ENCODE measurements at regions of chr15 and their contacts with region 1.

Region 1: DNA sequence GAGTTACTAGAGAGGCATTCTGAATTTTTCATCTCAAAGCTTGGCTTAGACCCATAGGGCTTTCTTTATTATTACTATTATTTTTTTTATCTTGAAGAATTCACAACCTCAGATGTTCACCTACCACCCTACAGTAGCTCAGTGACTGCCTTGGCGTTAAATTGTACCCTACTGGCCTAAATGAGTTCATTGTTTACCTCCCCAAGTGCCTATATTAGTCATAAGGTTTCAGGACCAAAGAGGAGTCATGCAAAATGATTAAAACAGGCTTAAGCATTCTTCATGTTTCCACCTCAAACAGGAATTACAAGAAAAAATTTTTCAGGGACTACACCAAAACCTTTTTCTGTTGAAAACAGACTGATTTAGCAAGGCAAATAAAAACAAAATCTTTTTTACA is 751.5 kb downstream of the SQOR start:
- DNase-seq: no peak
- ATAC-seq: no peak
- H3K4me3 ChIP-seq: no peak overlapping the region
- H3K4me3 Mint-ChIP-seq: no peak overlapping the region
- H3K27ac ChIP-seq: no peak overlapping the region
- H3K27ac Mint-ChIP-seq: no peak overlapping the region
- H3K4me1 ChIP-seq: no peaks in the 10 kb centered on the region
- H3K4me1 Mint-ChIP-seq: no peaks in the 10 kb centered on the region
- H3K27me3 ChIP-seq: no peaks in the 10 kb centered on the region
- H3K27me3 Mint-ChIP-seq: no peaks in the 10 kb centered on the region
- CTCF ChIP-seq: no peak

Region 2: GRCh38 chr15:46151786-46152185 is 234.6 kb before region 1 on chr15:
- CTCF ChIA-PET with region 1: no interaction called
- POLR2A ChIA-PET with region 1: no interaction called
- intact Hi-C with region 1: no loop called
- DNase-seq: no peak
- ATAC-seq: no peak
- H3K4me3 ChIP-seq: no peak overlapping the region
- H3K4me3 Mint-ChIP-seq: no peak overlapping the region
- H3K27ac ChIP-seq: no peak overlapping the region
- H3K27ac Mint-ChIP-seq: no peak overlapping the region
- H3K4me1 ChIP-seq: no peaks in the 10 kb centered on the region
- H3K4me1 Mint-ChIP-seq: no peaks in the 10 kb centered on the region
- H3K27me3 ChIP-seq: no peaks in the 10 kb centered on the region
- H3K27me3 Mint-ChIP-seq: no peaks in the 10 kb centered on the region
- CTCF ChIP-seq: no peak

Region 3: GRCh38 chr15:46442184-46442583 is 55.8 kb after region 1 on chr15:
- CTCF ChIA-PET with region 1: no interaction called
- POLR2A ChIA-PET with region 1: no interaction called
- intact Hi-C with region 1: loop called in 1 of 2 experiments (anchors 5 kb)
- DNase-seq: no peak
- ATAC-seq: no peak
- H3K4me3 ChIP-seq: no peak overlapping the region
- H3K4me3 Mint-ChIP-seq: no peak overlapping the region
- H3K27ac ChIP-seq: no peak overlapping the region
- H3K27ac Mint-ChIP-seq: no peak overlapping the region
- H3K4me1 ChIP-seq: no peaks in the 10 kb centered on the region
- H3K4me1 Mint-ChIP-seq: no peaks in the 10 kb centered on the region
- H3K27me3 ChIP-seq: no peaks in the 10 kb centered on the region
- H3K27me3 Mint-ChIP-seq: no peaks in the 10 kb centered on the region
- CTCF ChIP-seq: no peak

Region 4: DNA sequence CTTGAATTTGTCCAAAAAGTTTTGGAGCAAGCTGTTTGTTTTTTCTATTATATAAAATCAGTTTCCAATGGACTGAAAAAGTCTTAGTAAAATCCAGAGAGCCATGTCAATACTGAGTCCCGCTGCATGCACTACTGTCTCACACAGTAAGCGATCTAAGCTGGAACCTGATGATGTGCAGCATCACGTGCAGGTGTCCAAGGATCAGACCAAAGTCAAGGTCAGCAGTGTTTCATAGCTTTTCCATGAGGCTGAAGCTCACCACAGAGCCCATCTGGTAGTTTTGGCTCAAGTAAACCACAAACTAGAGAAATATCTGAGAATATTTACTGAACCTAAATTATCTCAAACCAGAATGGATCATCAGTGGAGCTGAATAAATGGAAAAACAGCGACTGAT is 547.0 kb after region 1 on chr15:
- CTCF ChIA-PET with region 1: no interaction called
- POLR2A ChIA-PET with region 1: no interaction called
- intact Hi-C with region 1: no loop called
- DNase-seq: no peak
- ATAC-seq: no peak
- H3K4me3 ChIP-seq: no peak overlapping the region
- H3K4me3 Mint-ChIP-seq: no peak overlapping the region
- H3K27ac ChIP-seq: no peak overlapping the region
- H3K27ac Mint-ChIP-seq: no peak overlapping the region
- H3K4me1 ChIP-seq: no peaks in the 10 kb centered on the region
- H3K4me1 Mint-ChIP-seq: no peaks in the 10 kb centered on the region
- H3K27me3 ChIP-seq: no peaks in the 10 kb centered on the region
- H3K27me3 Mint-ChIP-seq: no peaks in the 10 kb centered on the region
- CTCF ChIP-seq: no peak

Measured in CD8-positive, alpha-beta T cell (primary cell).